Calu3 (cell line): ENCODE measurements at regions of chr2 and their contacts with region 1.

Region 1: DNA sequence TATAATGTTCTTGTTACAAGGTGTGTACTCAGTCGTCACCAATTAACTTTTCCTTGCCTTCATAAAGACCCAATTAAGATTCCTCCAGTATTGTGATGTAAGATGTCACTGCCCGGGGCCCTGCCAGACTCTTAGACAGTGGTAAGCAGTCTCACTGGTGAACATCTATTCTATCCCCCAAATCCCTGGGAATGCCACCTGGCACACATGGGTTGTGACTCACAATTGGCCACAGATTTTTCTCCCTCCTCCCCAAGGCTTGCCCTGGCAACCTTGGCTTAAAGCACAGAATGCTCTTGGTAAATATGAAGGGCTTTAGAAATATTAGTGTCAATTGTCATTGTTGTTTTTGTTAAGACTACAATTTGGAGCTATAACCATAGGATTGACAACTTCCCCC is 287.9 kb downstream of the ETAA1 start:
- DNase-seq: no peak
- H3K4me3 Mint-ChIP-seq: no peak overlapping the region
- H3K27ac Mint-ChIP-seq: no peak overlapping the region
- H3K4me1 Mint-ChIP-seq: no peaks in the 10 kb centered on the region
- H3K27me3 Mint-ChIP-seq: peaks cover 44% of the 10 kb centered on the region
- CTCF ChIP-seq: no peak

Region 2: GRCh38 chr2:67727131-67727530 is 42.1 kb after region 1 on chr2:
- CTCF ChIA-PET with region 1: no interaction called
- intact Hi-C with region 1: loop called (anchors 1 kb)
- DNase-seq: no peak
- H3K4me3 Mint-ChIP-seq: no peak overlapping the region
- H3K27ac Mint-ChIP-seq: no peak overlapping the region
- H3K4me1 Mint-ChIP-seq: no peaks in the 10 kb centered on the region
- H3K27me3 Mint-ChIP-seq: no peaks in the 10 kb centered on the region
- CTCF ChIP-seq: no peak

Region 3: DNA sequence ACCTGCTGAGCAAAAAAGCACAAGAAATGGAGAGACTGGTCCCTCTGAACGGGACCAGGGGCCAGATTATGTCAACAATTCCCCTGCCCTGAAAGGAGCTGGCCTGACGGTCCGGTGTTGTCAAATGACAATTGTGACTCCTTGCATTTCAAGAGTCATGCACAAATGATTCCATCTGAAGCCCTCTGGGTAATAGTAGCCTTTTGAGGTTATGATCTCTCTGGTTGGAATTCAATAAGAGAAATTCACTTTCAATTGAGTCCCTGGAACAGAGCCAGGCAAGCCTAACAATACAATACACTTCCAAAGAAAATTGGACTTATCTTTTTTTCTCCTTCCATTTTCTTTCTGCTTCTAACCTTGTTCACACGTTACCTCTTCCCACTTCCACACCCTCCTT is 260.9 kb after region 1 on chr2:
- CTCF ChIA-PET with region 1: no interaction called
- intact Hi-C with region 1: no loop called
- DNase-seq: no peak
- H3K4me3 Mint-ChIP-seq: no peak overlapping the region
- H3K27ac Mint-ChIP-seq: no peak overlapping the region
- H3K4me1 Mint-ChIP-seq: no peaks in the 10 kb centered on the region
- H3K27me3 Mint-ChIP-seq: no peaks in the 10 kb centered on the region
- CTCF ChIP-seq: no peak